ENCODE measurements at regions of chr3 and their contacts with region 1.

Region 1: DNA sequence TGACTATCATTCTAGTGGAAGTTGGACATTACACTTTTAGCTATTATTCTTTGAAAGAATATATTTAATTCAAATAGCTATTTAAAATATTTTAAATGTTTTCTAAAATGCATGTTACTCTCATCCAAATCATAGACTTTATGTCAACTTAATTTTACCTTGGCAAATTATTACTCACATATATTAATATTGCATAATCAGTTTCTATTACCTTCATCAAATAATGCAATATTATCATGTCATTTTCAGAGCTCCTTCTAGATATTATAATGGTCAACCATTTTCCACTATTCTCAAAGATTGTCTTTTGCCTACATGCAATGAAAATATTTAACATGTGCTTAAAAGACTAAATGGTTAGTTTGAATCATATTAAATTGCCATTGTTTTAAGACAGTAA is 16.9 kb upstream of the ARL6 start:
- DNase-seq: no peak
- H3K4me3 ChIP-seq: no peak overlapping the region
- H3K27ac ChIP-seq: no peak overlapping the region
- H3K4me1 ChIP-seq: no peaks in the 10 kb centered on the region
- H3K27me3 ChIP-seq: no peaks in the 10 kb centered on the region
- CTCF ChIP-seq: no peak
- POLR2A ChIP-seq: no peak

Region 2: GRCh38 chr3:96059301-96059700 is 1688.4 kb before region 1 on chr3:
- intact Hi-C with region 1: no loop called
- DNase-seq: no peak
- H3K4me3 ChIP-seq: no peak overlapping the region
- H3K27ac ChIP-seq: no peak overlapping the region
- H3K4me1 ChIP-seq: no peaks in the 10 kb centered on the region
- H3K27me3 ChIP-seq: no peaks in the 10 kb centered on the region
- CTCF ChIP-seq: no peak
- POLR2A ChIP-seq: no peak

Region 3: DNA sequence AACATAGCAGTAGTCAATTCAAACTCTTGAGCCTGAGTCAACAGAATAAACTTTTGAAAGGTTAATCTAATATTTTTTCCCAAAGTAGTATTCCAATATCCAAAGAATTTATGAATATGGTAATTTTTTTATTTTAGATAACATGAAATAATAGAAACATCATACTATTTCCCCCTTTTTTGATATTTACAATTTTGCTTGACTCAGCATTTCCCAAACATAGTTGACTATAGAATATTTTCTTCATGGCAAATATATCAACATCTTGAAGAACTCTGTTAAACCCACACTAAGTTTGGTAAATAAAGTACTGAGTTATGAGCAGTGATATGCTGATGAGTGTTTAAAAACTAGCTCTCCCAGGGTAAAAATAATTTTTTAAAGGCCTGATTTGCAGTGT is 363.1 kb before region 1 on chr3:
- intact Hi-C with region 1: loop called (anchors 5 kb)
- DNase-seq: no peak
- H3K4me3 ChIP-seq: no peak overlapping the region
- H3K27ac ChIP-seq: no peak overlapping the region
- H3K4me1 ChIP-seq: no peaks in the 10 kb centered on the region
- H3K27me3 ChIP-seq: no peaks in the 10 kb centered on the region
- CTCF ChIP-seq: no peak
- POLR2A ChIP-seq: no peak

Region 4: GRCh38 chr3:97804471-97804870 is 56.8 kb after region 1 on chr3:
- intact Hi-C with region 1: no loop called
- DNase-seq: no peak
- H3K4me3 ChIP-seq: no peak overlapping the region
- H3K27ac ChIP-seq: no peak overlapping the region
- H3K4me1 ChIP-seq: no peaks in the 10 kb centered on the region
- H3K27me3 ChIP-seq: no peaks in the 10 kb centered on the region
- CTCF ChIP-seq: no peak
- POLR2A ChIP-seq: no peak